ENCODE measurements at regions of chr22 and their contacts with region 1.

Region 1: DNA sequence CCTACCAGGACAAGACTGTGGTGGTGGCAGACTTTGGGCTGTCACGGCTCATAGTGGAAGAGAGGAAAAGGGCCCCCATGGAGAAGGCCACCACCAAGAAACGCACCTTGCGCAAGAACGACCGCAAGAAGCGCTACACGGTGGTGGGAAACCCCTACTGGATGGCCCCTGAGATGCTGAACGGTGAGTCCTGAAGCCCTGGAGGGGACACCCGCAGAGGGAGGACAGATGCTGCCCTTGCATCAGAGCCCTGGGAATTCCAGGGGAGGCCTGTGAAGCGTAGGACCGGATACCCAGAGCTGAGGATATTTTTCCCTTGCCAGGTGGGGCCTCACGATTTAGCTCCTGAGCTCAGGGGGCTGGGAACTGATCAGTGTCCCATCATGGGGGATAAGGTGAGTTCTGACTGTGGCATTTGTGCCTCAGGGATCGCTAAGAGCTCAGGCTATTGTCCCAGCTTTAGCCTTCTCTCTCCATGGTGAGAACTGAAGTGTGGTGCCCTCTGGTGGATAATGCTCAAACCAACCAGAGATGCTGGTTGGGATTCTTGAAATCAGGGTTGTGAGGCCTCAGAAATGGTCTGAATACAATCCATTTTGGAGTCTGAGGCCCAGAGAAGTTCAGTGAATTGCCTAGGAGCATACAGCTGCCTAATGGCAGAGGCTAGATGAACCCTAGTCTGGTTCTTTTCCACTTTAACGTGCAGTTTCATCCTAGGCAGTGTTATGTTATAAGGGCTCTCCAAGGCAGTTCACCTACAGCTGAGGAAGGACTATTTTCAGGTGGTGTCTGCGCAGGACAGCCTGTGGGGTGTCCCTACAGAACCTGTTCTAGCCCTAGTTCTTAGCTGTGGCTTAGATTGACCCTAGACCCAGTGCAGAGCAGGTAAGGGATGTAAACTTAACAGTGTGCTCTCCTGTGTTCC is 19.5 kb downstream of the PIK3IP1 start:
- DNase-seq: peak; percentile 76
- H3K4me3 Mint-ChIP-seq: no peak overlapping the region
- H3K27ac Mint-ChIP-seq: no peak overlapping the region
- H3K4me1 Mint-ChIP-seq: peaks cover 58% of the 10 kb centered on the region
- H3K27me3 Mint-ChIP-seq: no peaks in the 10 kb centered on the region

Region 2: GRCh38 chr22:30947816-30948454 is 324.8 kb before region 1 on chr22:
- CTCF ChIA-PET with region 1: interaction called, 3 read pairs
- intact Hi-C with region 1: loop called (anchors 10 kb)
- DNase-seq: no peak
- H3K4me3 Mint-ChIP-seq: no peak overlapping the region
- H3K27ac Mint-ChIP-seq: no peak overlapping the region
- H3K4me1 Mint-ChIP-seq: peaks cover 60% of the 10 kb centered on the region
- H3K27me3 Mint-ChIP-seq: no peaks in the 10 kb centered on the region

Region 3: GRCh38 chr22:31218565-31219262 is 54.1 kb before region 1 on chr22:
- CTCF ChIA-PET with region 1: interaction called, 59 read pairs
- intact Hi-C with region 1: no loop called
- DNase-seq: no peak
- H3K4me3 Mint-ChIP-seq: no peak overlapping the region
- H3K27ac Mint-ChIP-seq: peak overlapping the region; percentile 38
- H3K4me1 Mint-ChIP-seq: peaks cover 52% of the 10 kb centered on the region
- H3K27me3 Mint-ChIP-seq: no peaks in the 10 kb centered on the region

Region 4: GRCh38 chr22:31262312-31263080 is 10.3 kb before region 1 on chr22:
- CTCF ChIA-PET with region 1: interaction called, 12 read pairs
- intact Hi-C with region 1: no loop called
- DNase-seq: no peak
- H3K4me3 Mint-ChIP-seq: no peak overlapping the region
- H3K27ac Mint-ChIP-seq: no peak overlapping the region
- H3K4me1 Mint-ChIP-seq: peaks cover 2% of the 10 kb centered on the region
- H3K27me3 Mint-ChIP-seq: no peaks in the 10 kb centered on the region

Region 5: DNA sequence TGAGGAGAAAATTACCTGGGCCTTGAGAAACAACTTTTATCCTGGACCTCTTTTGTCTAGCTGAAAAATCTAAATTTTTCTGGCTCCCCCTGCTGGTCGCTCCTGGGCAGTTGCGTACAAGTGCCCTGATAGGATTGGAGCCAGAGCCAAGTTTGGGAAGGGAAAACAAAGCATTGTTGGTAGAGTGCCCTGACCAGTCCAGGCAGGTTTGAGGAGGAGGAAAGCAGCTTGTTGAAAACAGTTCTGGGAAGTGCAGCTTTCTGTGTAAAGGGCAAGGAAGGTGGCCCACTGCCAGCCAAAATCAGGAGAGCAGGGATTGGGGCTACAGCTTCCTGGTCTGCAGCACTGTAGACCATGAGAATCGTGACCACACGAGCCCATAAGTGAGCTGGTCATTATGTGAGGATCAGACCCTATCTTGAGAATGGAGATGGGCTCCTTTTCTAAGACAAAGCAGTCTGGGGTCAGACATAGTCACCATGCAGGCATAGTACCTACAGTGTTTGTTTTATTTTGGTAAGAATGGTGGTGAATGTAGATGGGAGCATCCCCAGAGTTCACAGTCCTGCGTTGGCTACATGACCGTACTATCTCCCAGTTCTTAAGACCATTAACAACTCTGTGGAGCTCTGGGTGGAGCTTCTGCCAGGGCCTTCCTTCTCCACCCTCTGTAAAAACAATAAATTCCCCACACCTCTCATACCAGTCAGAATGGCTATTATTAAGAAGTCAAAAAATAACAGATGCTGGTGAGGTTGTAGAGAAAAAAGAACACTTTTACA is 40.8 kb after region 1 on chr22:
- CTCF ChIA-PET with region 1: interaction called, 12 read pairs
- intact Hi-C with region 1: no loop called
- DNase-seq: peak; percentile 87
- H3K4me3 Mint-ChIP-seq: no peak overlapping the region
- H3K27ac Mint-ChIP-seq: peak overlapping the region; percentile 12
- H3K4me1 Mint-ChIP-seq: peaks cover 27% of the 10 kb centered on the region
- H3K27me3 Mint-ChIP-seq: no peaks in the 10 kb centered on the region